ENCODE measurements at regions of chr20 and their contacts with region 1.

Region 1: DNA sequence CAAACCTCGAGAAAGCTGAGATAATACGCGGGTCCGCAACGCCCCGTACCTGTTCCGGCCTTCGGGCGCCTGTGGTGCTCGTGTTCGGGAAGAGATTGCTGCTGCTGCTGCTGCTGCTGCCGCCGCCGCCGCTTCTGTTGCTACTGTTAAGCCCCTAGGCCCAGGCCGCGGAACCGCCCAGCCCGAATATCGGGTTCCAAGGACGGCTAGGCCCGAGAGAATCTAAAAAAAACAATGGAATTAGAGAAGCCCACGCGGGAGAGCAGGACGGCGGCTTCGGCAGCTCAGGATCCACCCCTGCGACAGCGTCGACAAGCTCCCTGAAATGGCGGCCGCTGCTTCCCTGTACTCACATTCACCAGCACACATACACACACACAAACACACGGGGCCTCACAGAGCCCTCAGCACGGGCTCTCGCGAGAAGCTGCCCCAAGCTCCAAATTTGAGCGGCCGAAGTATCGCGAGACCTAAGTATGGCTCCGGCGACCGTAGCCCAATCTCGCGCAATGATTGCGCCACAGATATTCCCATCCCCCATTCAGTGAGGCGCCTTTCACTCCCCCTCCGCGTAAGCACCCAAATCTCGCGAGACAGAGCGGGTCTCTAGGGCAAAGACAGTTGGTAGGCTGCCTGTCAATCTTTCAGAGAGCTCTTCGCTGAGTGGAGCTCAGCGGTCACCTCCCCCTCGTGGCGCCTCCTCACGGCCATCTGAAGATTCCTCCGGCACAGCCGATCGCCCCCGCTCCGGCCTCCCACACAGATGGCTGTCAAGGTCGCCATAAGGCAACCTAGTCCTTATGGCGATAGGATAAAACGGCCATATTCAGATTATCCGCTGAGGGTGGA is at the start of gene RBM39:
- DNase-seq: peak; percentile 96 to 100 (median 99)
- ATAC-seq: peak; percentile 80
- H3K4me3 ChIP-seq: peak within 1 kb of the TSS; percentile 84
- H3K4me3 Mint-ChIP-seq: peak within 1 kb of the TSS; percentile 99
- H3K27ac ChIP-seq: peak within 1 kb of the TSS; percentile 99 to 100
- H3K27ac Mint-ChIP-seq: peak within 1 kb of the TSS; percentile 99
- H3K4me1 ChIP-seq: peaks cover 44% of the 10 kb centered on the region
- H3K4me1 Mint-ChIP-seq: peaks cover 56% of the 10 kb centered on the region
- H3K27me3 ChIP-seq: no peaks in the 10 kb centered on the region
- H3K27me3 Mint-ChIP-seq: no peaks in the 10 kb centered on the region
- CTCF ChIP-seq: peak; percentile 57
- total RNA-seq, gene RBM39: 1,057 to 1,091 TPM

Region 2: GRCh38 chr20:35490736-35491181 is 251.4 kb before region 1 on chr20:
- CTCF ChIA-PET with region 1: no interaction called
- POLR2A ChIA-PET with region 1: interaction called, 33 read pairs
- intact Hi-C with region 1: no loop called
- DNase-seq: peak; percentile 41 to 89 (median 59)
- ATAC-seq: peak; percentile 99
- H3K4me3 ChIP-seq: peak overlapping the region; percentile 94
- H3K4me3 Mint-ChIP-seq: peak overlapping the region; percentile 100
- H3K27ac ChIP-seq: peak overlapping the region; percentile 63 to 87
- H3K27ac Mint-ChIP-seq: peak overlapping the region; percentile 98
- H3K4me1 ChIP-seq: peaks cover 59% of the 10 kb centered on the region
- H3K4me1 Mint-ChIP-seq: peaks cover 72% of the 10 kb centered on the region
- H3K27me3 ChIP-seq: no peaks in the 10 kb centered on the region
- H3K27me3 Mint-ChIP-seq: no peaks in the 10 kb centered on the region
- CTCF ChIP-seq: no peak

Region 3: GRCh38 chr20:35699127-35699975 is 42.8 kb before region 1 on chr20 and contains the starts of genes NFS1 and ROMO1:
- CTCF ChIA-PET with region 1: interaction called, 4 read pairs
- POLR2A ChIA-PET with region 1: interaction called, 125 read pairs
- intact Hi-C with region 1: loop called (anchors 2 to 5 kb)
- DNase-seq: peak; percentile 77 to 94 (median 82)
- ATAC-seq: peak; percentile 89
- H3K4me3 ChIP-seq: peak within 1 kb of the TSS; percentile 95
- H3K4me3 Mint-ChIP-seq: peak within 1 kb of the TSS; percentile 95
- H3K27ac ChIP-seq: peak within 1 kb of the TSS; percentile 93 to 97
- H3K27ac Mint-ChIP-seq: peak within 1 kb of the TSS; percentile 84
- H3K4me1 ChIP-seq: peaks cover 23% of the 10 kb centered on the region
- H3K4me1 Mint-ChIP-seq: peaks cover 52% of the 10 kb centered on the region
- H3K27me3 ChIP-seq: no peaks in the 10 kb centered on the region
- H3K27me3 Mint-ChIP-seq: no peaks in the 10 kb centered on the region
- CTCF ChIP-seq: peak; percentile 11
- total RNA-seq, gene NFS1: 10.6 to 11.5 TPM
- total RNA-seq, gene ROMO1: 32.9 to 35.8 TPM

Region 4: DNA sequence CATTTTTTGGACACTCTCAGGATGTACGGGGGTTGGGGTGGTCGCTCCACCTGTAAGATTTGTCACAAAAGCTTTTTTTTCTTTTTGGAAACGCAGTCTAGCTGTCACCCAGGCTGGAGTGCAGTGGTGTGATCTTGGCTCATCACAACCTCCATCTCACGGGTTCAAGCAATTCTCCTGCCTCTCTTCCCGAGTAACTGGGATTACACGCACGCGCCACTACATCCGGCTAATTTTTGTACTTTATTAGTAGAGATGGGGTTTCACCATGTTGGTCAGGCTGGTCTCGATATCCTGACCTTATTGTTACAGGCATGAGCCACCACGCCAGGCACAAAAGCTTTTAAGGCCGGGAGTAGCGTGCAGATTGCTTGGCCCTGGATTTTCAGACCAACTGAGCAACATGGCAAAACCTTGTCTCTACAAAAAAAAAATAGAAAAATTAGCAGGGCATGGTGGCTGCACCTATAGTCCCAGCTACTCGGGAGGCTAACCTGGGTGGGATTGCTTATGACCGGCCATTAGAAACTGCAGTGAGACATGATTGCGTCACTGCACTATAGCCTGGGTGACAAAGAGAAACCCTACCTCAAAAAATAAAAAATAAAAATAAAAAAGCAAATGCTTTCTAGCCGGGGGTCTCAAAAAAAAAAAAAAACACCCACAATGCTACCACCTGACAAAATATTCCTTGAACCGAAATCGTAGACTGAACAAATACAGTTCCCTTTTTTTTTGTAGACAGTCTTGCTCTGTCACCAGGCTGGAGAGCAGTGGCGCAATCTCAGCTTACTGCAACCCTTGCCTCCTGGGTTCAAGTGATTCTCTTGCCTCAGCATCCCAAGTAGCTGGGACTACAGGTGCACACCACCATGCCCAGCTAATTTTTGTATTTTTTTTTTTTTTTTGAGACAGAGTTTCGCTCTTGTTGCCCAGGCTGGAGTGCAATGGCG is 15.1 kb before region 1 on chr20:
- CTCF ChIA-PET with region 1: interaction called, 12 read pairs
- POLR2A ChIA-PET with region 1: interaction called, 32 read pairs
- intact Hi-C with region 1: no loop called
- DNase-seq: no peak
- ATAC-seq: no peak
- H3K4me3 ChIP-seq: no peak overlapping the region
- H3K4me3 Mint-ChIP-seq: no peak overlapping the region
- H3K27ac ChIP-seq: no peak overlapping the region
- H3K27ac Mint-ChIP-seq: peak overlapping the region; percentile 20
- H3K4me1 ChIP-seq: peaks cover 26% of the 10 kb centered on the region
- H3K4me1 Mint-ChIP-seq: peaks cover 46% of the 10 kb centered on the region
- H3K27me3 ChIP-seq: no peaks in the 10 kb centered on the region
- H3K27me3 Mint-ChIP-seq: no peaks in the 10 kb centered on the region
- CTCF ChIP-seq: no peak

Region 5: GRCh38 chr20:35796571-35796970 is 54.5 kb after region 1 on chr20:
- CTCF ChIA-PET with region 1: no interaction called
- POLR2A ChIA-PET with region 1: interaction called, 38 read pairs
- intact Hi-C with region 1: no loop called
- DNase-seq: peak in 3 of 14 experiments; percentile 54 to 74 (median 58)
- ATAC-seq: peak; percentile 83
- H3K4me3 ChIP-seq: no peak overlapping the region
- H3K4me3 Mint-ChIP-seq: peak overlapping the region; percentile 65
- H3K27ac ChIP-seq: peak overlapping the region; percentile 35 to 58
- H3K27ac Mint-ChIP-seq: peak overlapping the region; percentile 91
- H3K4me1 ChIP-seq: peaks cover 33% of the 10 kb centered on the region
- H3K4me1 Mint-ChIP-seq: peaks cover 46% of the 10 kb centered on the region
- H3K27me3 ChIP-seq: no peaks in the 10 kb centered on the region
- H3K27me3 Mint-ChIP-seq: no peaks in the 10 kb centered on the region
- CTCF ChIP-seq: no peak

Region 6: DNA sequence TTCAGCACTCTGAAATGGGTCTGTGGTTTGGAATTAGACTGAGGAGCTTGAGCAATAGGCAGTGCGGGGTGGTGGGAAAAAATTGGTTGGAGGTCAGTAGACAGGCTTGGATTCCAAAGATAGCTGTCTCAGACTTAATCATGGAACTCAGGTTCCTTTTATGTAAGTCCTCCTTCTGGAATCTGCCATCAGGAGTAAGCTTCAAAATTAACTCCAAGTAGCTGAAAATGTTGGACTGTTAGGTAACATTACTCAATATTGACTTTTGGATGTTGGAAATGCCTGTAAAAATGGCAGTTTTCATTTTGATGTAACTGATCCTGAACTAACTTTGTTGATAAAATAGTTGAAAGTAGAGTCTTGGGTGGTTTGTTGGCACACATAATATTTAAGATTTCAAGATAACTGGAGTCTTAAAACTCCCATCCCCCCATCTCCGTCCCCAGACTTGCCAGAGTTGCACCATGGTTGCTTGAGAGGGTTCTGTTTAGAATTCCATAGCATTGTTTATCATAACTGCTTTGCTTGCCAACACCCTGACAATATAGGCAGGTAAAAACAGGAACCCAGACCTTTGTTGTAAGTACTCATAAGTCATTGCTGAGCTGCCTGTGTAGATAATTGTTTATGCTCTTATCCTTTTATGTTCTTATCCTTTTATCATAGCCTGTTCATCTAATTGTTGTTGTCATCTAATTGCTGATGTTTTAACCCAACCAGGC is 112.8 kb after region 1 on chr20:
- CTCF ChIA-PET with region 1: no interaction called
- POLR2A ChIA-PET with region 1: interaction called, 10 read pairs
- intact Hi-C with region 1: no loop called
- DNase-seq: no peak
- ATAC-seq: no peak
- H3K4me3 ChIP-seq: no peak overlapping the region
- H3K4me3 Mint-ChIP-seq: no peak overlapping the region
- H3K27ac ChIP-seq: no peak overlapping the region
- H3K27ac Mint-ChIP-seq: peak overlapping the region; percentile 27
- H3K4me1 ChIP-seq: no peaks in the 10 kb centered on the region
- H3K4me1 Mint-ChIP-seq: peaks cover 18% of the 10 kb centered on the region
- H3K27me3 ChIP-seq: no peaks in the 10 kb centered on the region
- H3K27me3 Mint-ChIP-seq: no peaks in the 10 kb centered on the region
- CTCF ChIP-seq: no peak